Activated CD4-positive, alpha-beta memory T cell treated with anti-CD3 and anti-CD28 coated beads, Interleukin-2, amount 10 ng/mL, durations not matched to agents 7 days and 5 days (primary cell): ENCODE measurements at regions of chr12 and their contacts with region 1.

Region 1: DNA sequence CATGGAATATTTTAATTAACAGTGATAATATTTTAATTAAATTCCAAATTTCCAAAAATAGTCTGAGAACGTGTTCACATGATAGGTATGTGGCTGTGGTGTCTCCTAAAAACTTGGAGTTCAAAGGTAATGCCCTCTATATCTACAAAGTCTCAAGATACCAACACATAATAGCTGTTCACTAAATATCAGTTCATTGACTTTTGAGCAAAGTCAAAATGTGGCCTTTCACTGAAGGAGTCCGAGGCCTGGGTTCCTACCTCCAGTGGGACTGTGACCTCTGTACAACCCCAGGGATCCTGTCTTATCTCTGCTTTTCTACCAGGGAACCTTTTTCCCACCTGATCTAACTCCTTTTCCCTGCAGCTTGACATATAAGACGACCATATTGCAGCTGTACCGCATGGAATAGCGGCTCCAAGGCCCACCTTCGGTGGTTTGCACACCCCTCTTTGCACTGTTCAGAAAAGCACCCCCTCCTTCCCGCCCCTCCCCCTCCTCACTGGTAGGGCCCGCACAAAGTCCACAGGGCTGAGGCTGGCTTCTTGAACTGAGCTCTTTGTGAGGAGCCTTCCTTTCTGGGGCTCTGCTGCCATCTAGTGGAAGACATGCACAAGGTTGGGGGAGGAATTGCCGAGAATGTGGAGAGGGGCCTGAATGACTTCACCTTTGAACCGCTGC is 3.1 kb downstream of the CCND2 start:
- DNase-seq: peak; percentile 89
- H3K4me3 Mint-ChIP-seq: peak overlapping the region; percentile 97
- H3K27ac Mint-ChIP-seq: peak overlapping the region; percentile 100
- H3K4me1 Mint-ChIP-seq: peaks cover 65% of the 10 kb centered on the region
- H3K27me3 Mint-ChIP-seq: no peaks in the 10 kb centered on the region

Region 2: DNA sequence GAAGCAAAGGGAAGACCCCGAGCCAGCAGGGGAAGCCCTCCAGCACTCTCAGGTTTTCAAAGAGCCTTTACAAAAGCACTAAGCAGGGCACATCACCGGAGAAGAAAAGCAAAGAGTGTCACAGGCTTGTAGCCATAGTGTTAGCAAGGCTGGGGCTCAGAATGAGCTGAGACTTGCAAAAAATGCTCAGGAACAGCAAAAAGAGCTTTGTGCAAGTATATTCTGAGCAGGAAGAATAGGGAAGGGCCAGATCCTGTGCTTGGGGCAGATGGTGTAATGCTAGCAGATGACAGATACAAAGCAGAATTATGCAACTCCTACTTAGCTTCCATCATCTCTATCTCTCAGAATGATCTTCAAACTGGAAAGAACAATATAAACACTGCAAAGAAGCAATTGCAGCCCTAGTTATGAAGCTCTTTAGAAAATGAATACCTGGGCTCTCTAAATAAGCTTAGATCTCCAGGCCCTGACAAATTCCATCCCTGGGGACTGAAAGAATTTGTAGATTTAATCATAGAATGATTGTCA is 379.8 kb before region 1 on chr12:
- CTCF ChIA-PET with region 1: interaction called, 8 read pairs
- POLR2A ChIA-PET with region 1: interaction called, 11 read pairs
- DNase-seq: no peak
- H3K4me3 Mint-ChIP-seq: peak overlapping the region; percentile 51
- H3K27ac Mint-ChIP-seq: peak overlapping the region; percentile 97
- H3K4me1 Mint-ChIP-seq: peaks cover 37% of the 10 kb centered on the region
- H3K27me3 Mint-ChIP-seq: no peaks in the 10 kb centered on the region

Region 3: GRCh38 chr12:3998968-3999826 is 277.5 kb before region 1 on chr12:
- CTCF ChIA-PET with region 1: interaction called, 120 read pairs
- POLR2A ChIA-PET with region 1: interaction called, 39 read pairs
- DNase-seq: no peak
- H3K4me3 Mint-ChIP-seq: no peak overlapping the region
- H3K27ac Mint-ChIP-seq: no peak overlapping the region
- H3K4me1 Mint-ChIP-seq: peaks cover 6% of the 10 kb centered on the region
- H3K27me3 Mint-ChIP-seq: peaks cover 6% of the 10 kb centered on the region

Region 4: DNA sequence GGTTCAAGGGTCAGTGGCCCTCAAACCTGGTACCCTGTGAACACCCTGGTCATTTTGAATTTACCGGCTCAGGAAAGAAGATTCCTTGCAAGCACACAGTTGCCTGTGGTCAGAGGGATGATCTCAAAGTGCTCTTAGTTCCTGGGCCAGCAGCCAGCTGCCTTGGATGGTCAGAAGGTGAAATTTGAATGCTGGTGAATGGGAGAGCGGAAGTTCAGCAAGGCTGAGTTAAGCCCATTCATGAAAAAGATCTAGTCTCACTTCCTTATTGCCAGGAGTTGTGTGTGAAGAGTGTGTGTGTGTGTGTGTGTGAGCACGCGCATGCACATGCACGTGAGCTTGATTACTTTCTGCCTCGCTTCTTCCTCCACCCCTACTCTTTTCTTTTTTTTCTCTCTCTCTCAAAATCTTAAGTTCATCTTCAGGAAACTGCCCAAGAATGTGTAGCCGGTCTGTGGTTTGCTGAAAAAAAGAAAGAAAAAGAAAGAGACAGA is 158.6 kb before region 1 on chr12:
- CTCF ChIA-PET with region 1: interaction called, 37 read pairs
- POLR2A ChIA-PET with region 1: interaction called, 170 read pairs
- DNase-seq: no peak
- H3K4me3 Mint-ChIP-seq: peak overlapping the region; percentile 63
- H3K27ac Mint-ChIP-seq: peak overlapping the region; percentile 90
- H3K4me1 Mint-ChIP-seq: peaks cover 72% of the 10 kb centered on the region
- H3K27me3 Mint-ChIP-seq: peaks cover 8% of the 10 kb centered on the region

Region 5: GRCh38 chr12:4169959-4170358 is 106.7 kb before region 1 on chr12:
- CTCF ChIA-PET with region 1: interaction called, 11 read pairs
- POLR2A ChIA-PET with region 1: interaction called, 23 read pairs
- DNase-seq: no peak
- H3K4me3 Mint-ChIP-seq: no peak overlapping the region
- H3K27ac Mint-ChIP-seq: no peak overlapping the region
- H3K4me1 Mint-ChIP-seq: peaks cover 41% of the 10 kb centered on the region
- H3K27me3 Mint-ChIP-seq: no peaks in the 10 kb centered on the region

Region 6: GRCh38 chr12:4293299-4293965 is 16.8 kb after region 1 on chr12:
- CTCF ChIA-PET with region 1: interaction called, 10 read pairs
- POLR2A ChIA-PET with region 1: interaction called, 43 read pairs
- DNase-seq: peak; percentile 61
- H3K4me3 Mint-ChIP-seq: peak overlapping the region; percentile 46
- H3K27ac Mint-ChIP-seq: peak overlapping the region; percentile 83
- H3K4me1 Mint-ChIP-seq: peaks cover 74% of the 10 kb centered on the region
- H3K27me3 Mint-ChIP-seq: no peaks in the 10 kb centered on the region